ENCODE measurements at regions of chr5 and their contacts with region 1.

Region 1: GRCh38 chr5:164475339-164475977 is 970.0 kb downstream of the MAT2B start:
- DNase-seq: no peak
- H3K4me3 ChIP-seq: no peak overlapping the region
- H3K27ac ChIP-seq: no peak overlapping the region
- H3K4me1 ChIP-seq: no peaks in the 10 kb centered on the region
- H3K27me3 ChIP-seq: no peaks in the 10 kb centered on the region
- CTCF ChIP-seq: peak; percentile 49; the same call in 1 of the 2 replicates

Region 2: DNA sequence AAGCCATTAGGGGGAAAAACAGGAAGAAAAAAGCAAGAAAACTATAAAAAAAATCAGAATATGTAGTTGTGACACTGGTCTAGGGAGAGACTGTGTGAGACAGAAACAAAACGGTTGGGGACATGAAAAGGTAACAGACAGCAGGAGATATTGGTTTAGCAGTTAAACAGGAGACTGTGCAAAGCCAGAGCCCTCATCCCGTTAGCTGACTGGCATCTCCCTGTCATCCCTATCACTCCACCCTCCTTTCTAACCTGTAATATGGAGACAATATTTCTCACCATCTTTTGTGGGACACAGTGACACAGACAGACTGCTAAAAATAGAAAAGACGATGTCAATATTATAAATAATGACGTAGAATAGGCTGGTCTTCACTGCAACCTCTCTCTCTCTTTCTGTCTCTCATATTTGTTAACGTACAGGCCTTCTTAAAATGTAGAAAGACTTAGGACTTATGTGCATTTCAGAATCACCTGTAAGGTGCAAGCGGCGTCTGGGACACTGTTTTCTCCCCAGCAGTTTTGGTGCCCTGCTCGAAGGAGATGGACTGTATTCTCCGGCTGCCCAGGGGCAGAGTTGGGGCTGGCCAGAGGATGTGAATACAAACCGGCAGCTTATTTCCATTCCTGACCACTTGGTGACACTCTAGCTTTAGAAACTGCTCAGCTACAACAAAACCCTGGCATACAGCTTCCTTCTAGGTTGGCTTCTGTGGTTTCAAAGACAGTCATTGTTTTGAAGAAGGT is 779.5 kb before region 1 on chr5:
- CTCF ChIA-PET with region 1: no interaction called
- POLR2A ChIA-PET with region 1: no interaction called
- intact Hi-C with region 1: loop called (anchors 1 kb)
- DNase-seq: peak; percentile 19 to 43
- H3K4me3 ChIP-seq: no peak overlapping the region
- H3K27ac ChIP-seq: no peak overlapping the region
- H3K4me1 ChIP-seq: no peaks in the 10 kb centered on the region
- H3K27me3 ChIP-seq: peaks cover 11% of the 10 kb centered on the region; the same call in 1 of the 2 replicates
- CTCF ChIP-seq: peak; percentile 61

Region 3: GRCh38 chr5:163821142-163821541 is 654.3 kb before region 1 on chr5:
- CTCF ChIA-PET with region 1: no interaction called
- POLR2A ChIA-PET with region 1: no interaction called
- intact Hi-C with region 1: no loop called
- DNase-seq: no peak
- H3K4me3 ChIP-seq: no peak overlapping the region
- H3K27ac ChIP-seq: no peak overlapping the region
- H3K4me1 ChIP-seq: no peaks in the 10 kb centered on the region
- H3K27me3 ChIP-seq: no peaks in the 10 kb centered on the region
- CTCF ChIP-seq: no peak